H1 (cell line): ENCODE measurements at regions of chr6 and their contacts with region 1.

Region 1: GRCh38 chr6:8888468-8888867 is 453.1 kb upstream of the SLC35B3 start:
- DNase-seq: no peak
- H3K4me3 ChIP-seq: no peak overlapping the region
- H3K27ac ChIP-seq: no peak overlapping the region
- H3K4me1 ChIP-seq: no peaks in the 10 kb centered on the region
- H3K27me3 ChIP-seq: no peaks in the 10 kb centered on the region
- CTCF ChIP-seq: peak in 2 of 3 experiments; percentile 38 to 57; a peak in 2 of 4 replicates
- EP300 ChIP-seq: no peak
- POLR2A ChIP-seq: no peak
- RAD21 ChIP-seq: peak; percentile 55 to 61

Region 2: DNA sequence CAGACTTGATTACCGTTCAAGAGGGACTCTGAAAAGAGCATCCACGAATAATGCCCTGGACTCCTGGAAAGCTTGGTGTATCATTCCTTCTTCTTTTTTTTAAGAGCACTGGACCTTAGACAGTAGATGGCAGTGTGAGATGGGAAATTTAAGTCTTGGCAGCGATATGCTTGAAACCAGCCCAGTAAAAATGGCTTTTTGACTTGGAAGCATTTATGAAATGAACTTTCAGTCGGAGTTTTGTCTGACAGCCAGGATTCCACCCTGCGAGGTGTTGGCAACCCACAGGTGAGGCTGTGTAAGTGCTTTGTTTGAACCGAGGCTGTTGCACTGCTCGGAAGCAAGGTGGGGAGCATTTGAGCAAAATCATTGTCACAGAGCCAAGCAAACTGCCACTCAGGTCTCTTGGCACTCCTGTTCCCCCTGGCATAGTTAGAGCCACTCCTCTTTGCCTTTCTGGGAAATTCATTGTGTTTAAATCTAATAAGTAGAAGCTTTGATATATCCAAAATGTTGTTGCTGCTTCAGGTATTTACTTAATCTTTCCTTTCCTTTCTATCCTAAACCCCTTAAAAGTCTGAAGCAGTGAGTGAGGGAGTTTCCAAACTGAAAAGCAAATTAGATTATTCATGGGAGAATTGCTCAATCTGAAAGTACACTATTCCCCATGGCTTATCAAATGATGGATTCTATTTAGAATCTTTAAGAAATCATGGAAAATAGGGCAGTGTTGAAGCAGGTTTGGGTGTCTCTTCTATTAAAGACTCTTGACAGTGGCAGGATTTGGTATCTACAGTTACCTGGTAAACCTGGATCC is 180.3 kb before region 1 on chr6:
- CTCF ChIA-PET with region 1: interaction called, 18 read pairs
- POLR2A ChIA-PET with region 1: no interaction called
- DNase-seq: peak in 1 of 2 experiments; percentile 46
- H3K4me3 ChIP-seq: no peak overlapping the region
- H3K27ac ChIP-seq: no peak overlapping the region
- H3K4me1 ChIP-seq: peaks cover 0 to 3% (median 1%) of the 10 kb centered on the region in 4 experiments; a peak in 2 of 7 replicates
- H3K27me3 ChIP-seq: no peaks in the 10 kb centered on the region
- CTCF ChIP-seq: peak in 2 of 3 experiments; percentile 34 to 42; a peak in 3 of 4 replicates
- EP300 ChIP-seq: no peak
- POLR2A ChIP-seq: no peak
- RAD21 ChIP-seq: peak; percentile 66 to 70

Region 3: GRCh38 chr6:8904754-8905153 is 16.3 kb after region 1 on chr6:
- CTCF ChIA-PET with region 1: interaction called, 19 read pairs
- POLR2A ChIA-PET with region 1: no interaction called
- DNase-seq: peak; percentile 10 to 53
- H3K4me3 ChIP-seq: no peak overlapping the region
- H3K27ac ChIP-seq: no peak overlapping the region
- H3K4me1 ChIP-seq: no peaks in the 10 kb centered on the region
- H3K27me3 ChIP-seq: no peaks in the 10 kb centered on the region
- CTCF ChIP-seq: peak; percentile 55 to 79 (median 70)
- EP300 ChIP-seq: no peak
- POLR2A ChIP-seq: no peak
- RAD21 ChIP-seq: peak; percentile 40 to 57